ENCODE measurements at regions of chr13 and their contacts with region 1.

Region 1: GRCh38 chr13:41193919-41194824 is at the start of gene KBTBD7:
- DNase-seq: peak; percentile 98
- ATAC-seq: peak; percentile 99
- total RNA-seq, gene KBTBD7: 5.9 TPM

Region 2: DNA sequence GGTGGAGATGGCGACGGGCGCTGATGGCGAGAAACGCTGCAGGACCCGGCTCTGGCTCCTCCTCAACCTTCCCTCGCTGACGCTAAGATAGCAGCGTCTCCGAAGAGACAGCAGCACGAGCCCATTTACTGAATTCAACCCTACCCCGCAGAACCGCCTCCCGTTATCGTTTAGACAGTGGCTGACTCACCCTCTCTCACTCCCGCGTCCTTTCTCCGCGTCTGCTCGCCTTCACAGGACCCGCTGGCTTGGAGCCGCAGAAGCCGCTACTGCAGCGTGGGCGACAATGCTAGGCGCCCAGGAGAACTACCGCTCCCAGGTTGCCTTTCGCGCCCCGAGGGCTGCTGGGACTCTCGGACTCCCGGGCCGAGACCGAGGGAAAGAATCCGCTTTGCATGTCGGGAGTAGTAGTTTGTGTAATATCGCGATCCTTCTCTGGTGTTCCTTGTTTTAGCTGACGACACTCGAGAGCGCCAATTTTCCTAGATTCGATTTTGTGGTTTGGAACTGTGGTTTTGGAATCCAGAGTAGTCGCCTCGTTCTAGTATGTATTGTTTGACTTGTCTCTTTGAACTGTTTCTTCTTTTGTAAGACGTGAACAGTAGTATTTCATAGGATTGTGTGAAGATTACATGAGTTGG is 61.5 kb before region 1 on chr13 and contains the start of gene KBTBD6:
- intact Hi-C with region 1: loop called (anchors 1 kb)
- DNase-seq: peak; percentile 97
- ATAC-seq: peak; percentile 99
- total RNA-seq, gene KBTBD6: 7.7 TPM